H1 (cell line): ENCODE measurements at regions of chr18 and their contacts with region 1.

Region 1: GRCh38 chr18:23207191-23207955 is 72.1 kb downstream of the CABLES1 start:
- DNase-seq: peak in 1 of 2 experiments; percentile 55
- H3K4me3 ChIP-seq: no peak overlapping the region
- H3K27ac ChIP-seq: no peak overlapping the region
- H3K4me1 ChIP-seq: no peaks in the 10 kb centered on the region
- H3K27me3 ChIP-seq: no peaks in the 10 kb centered on the region
- CTCF ChIP-seq: peak; percentile 60 to 93 (median 78)
- EP300 ChIP-seq: no peak
- POLR2A ChIP-seq: no peak
- RAD21 ChIP-seq: peak; percentile 70 to 84

Region 2: DNA sequence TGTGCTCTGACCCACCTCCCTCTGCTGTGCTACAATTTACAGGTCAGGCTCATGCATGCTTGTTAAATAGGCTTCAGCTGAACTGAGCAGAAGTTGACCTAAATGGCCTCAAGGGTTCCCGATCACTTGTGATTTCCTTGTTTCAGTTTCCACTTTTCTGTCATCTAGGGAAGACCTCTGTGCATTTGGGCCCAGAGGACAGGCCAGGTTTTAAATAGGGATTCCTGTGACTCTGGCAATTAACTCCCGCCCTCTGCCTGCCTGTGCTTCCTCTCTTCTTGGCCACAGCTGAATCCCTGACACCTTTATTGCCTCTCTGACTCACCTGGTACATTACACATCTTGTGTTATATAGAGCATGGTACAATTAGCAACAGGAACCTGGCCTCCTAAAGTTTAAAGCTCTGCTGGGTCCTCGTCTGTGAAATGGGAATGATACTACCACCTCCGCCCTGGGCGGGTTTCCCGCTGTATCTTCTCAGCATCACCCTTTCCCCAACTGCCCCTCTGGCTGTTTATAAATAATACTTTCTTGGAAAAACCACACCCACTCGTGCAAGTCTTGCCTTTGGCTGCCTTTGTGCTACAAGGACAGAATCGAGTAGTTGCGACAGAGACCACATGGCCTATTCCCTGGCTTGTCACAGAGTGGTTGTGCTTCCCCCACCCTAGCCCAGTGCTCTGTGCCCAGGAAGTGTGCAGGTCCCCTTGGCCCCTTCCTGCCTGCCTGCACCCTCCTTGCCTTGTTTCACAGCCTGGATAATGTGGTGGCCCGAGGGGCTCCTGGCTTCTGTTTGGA is 64.2 kb before region 1 on chr18:
- CTCF ChIA-PET with region 1: interaction called, 15 read pairs
- POLR2A ChIA-PET with region 1: no interaction called
- DNase-seq: no peak
- H3K4me3 ChIP-seq: no peak overlapping the region
- H3K27ac ChIP-seq: no peak overlapping the region
- H3K4me1 ChIP-seq: peaks cover 7 to 30% (median 12%) of the 10 kb centered on the region in 4 experiments
- H3K27me3 ChIP-seq: no peaks in the 10 kb centered on the region
- CTCF ChIP-seq: no peak
- EP300 ChIP-seq: no peak
- POLR2A ChIP-seq: no peak
- RAD21 ChIP-seq: no peak

Region 3: GRCh38 chr18:23194155-23194996 is 13.0 kb before region 1 on chr18:
- CTCF ChIA-PET with region 1: interaction called, 59 read pairs
- POLR2A ChIA-PET with region 1: interaction called, 4 read pairs
- DNase-seq: no peak
- H3K4me3 ChIP-seq: no peak overlapping the region
- H3K27ac ChIP-seq: no peak overlapping the region
- H3K4me1 ChIP-seq: peaks cover 5 to 15% (median 12%) of the 10 kb centered on the region in 4 experiments; a peak in 6 of 7 replicates
- H3K27me3 ChIP-seq: no peaks in the 10 kb centered on the region
- CTCF ChIP-seq: no peak
- EP300 ChIP-seq: no peak
- POLR2A ChIP-seq: no peak
- RAD21 ChIP-seq: no peak

Region 4: GRCh38 chr18:23220355-23220754 is 13.0 kb after region 1 on chr18:
- CTCF ChIA-PET with region 1: interaction called, 38 read pairs
- POLR2A ChIA-PET with region 1: no interaction called
- DNase-seq: no peak
- H3K4me3 ChIP-seq: no peak overlapping the region
- H3K27ac ChIP-seq: no peak overlapping the region
- H3K4me1 ChIP-seq: no peaks in the 10 kb centered on the region
- H3K27me3 ChIP-seq: no peaks in the 10 kb centered on the region
- CTCF ChIP-seq: no peak
- EP300 ChIP-seq: no peak
- POLR2A ChIP-seq: no peak
- RAD21 ChIP-seq: no peak

Region 5: GRCh38 chr18:23228102-23229061 is 21.0 kb after region 1 on chr18:
- CTCF ChIA-PET with region 1: interaction called, 38 read pairs
- POLR2A ChIA-PET with region 1: no interaction called
- DNase-seq: no peak
- H3K4me3 ChIP-seq: no peak overlapping the region
- H3K27ac ChIP-seq: no peak overlapping the region
- H3K4me1 ChIP-seq: peaks cover 0 to 5% (median 3%) of the 10 kb centered on the region in 4 experiments; a peak in 4 of 7 replicates
- H3K27me3 ChIP-seq: no peaks in the 10 kb centered on the region
- CTCF ChIP-seq: no peak
- EP300 ChIP-seq: no peak
- POLR2A ChIP-seq: no peak
- RAD21 ChIP-seq: no peak

Region 6: DNA sequence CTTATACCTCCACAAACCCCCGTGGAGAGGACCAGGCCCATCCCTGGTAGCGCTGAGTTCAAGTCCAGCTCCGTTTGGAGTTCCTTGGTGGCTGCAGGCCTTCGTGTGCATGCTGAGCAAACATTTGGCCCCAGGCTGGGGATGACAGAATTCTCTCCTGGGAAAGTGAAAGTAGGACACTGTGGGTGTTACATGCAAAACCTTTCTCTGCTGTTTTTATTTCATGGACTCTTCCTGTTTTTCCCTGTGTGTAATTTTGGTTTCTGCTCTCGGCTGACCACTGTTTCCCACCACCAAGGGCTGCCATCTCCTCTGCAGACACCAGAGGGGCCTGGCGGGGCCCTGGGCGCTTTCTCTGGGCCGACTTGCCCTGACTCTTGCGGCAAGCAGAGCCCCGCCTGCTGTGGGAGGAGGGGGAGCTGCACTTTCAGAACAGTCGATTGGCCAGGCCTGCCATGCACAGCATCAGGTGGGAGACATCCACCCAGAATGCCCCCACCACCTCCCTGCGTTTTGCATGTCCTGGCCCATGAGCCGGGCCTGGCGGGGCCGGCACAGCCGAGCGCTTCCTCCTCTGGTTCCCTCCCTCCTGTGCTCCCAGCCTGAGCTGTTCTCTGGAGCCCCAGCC is 30.3 kb after region 1 on chr18:
- CTCF ChIA-PET with region 1: interaction called, 15 read pairs
- POLR2A ChIA-PET with region 1: no interaction called
- DNase-seq: no peak
- H3K4me3 ChIP-seq: no peak overlapping the region
- H3K27ac ChIP-seq: no peak overlapping the region
- H3K4me1 ChIP-seq: peaks cover 0 to 10% (median 5%) of the 10 kb centered on the region in 4 experiments; a peak in 5 of 7 replicates
- H3K27me3 ChIP-seq: no peaks in the 10 kb centered on the region
- CTCF ChIP-seq: peak; percentile 10 to 37 (median 13)
- EP300 ChIP-seq: no peak
- POLR2A ChIP-seq: no peak
- RAD21 ChIP-seq: peak; percentile 42 to 60; a peak in 3 of 4 replicates